ENCODE measurements at regions of chr3 and their contacts with region 1.

Region 1: GRCh38 chr3:187025656-187026316 is 95.5 kb downstream of the ST6GAL1 start:
- DNase-seq: peak; percentile 53
- ATAC-seq: peak; percentile 22
- H3K4me3 Mint-ChIP-seq: peak overlapping the region; percentile 88
- H3K27ac Mint-ChIP-seq: peak overlapping the region; percentile 97
- H3K4me1 Mint-ChIP-seq: peaks cover 50% of the 10 kb centered on the region
- H3K27me3 Mint-ChIP-seq: no peaks in the 10 kb centered on the region

Region 2: DNA sequence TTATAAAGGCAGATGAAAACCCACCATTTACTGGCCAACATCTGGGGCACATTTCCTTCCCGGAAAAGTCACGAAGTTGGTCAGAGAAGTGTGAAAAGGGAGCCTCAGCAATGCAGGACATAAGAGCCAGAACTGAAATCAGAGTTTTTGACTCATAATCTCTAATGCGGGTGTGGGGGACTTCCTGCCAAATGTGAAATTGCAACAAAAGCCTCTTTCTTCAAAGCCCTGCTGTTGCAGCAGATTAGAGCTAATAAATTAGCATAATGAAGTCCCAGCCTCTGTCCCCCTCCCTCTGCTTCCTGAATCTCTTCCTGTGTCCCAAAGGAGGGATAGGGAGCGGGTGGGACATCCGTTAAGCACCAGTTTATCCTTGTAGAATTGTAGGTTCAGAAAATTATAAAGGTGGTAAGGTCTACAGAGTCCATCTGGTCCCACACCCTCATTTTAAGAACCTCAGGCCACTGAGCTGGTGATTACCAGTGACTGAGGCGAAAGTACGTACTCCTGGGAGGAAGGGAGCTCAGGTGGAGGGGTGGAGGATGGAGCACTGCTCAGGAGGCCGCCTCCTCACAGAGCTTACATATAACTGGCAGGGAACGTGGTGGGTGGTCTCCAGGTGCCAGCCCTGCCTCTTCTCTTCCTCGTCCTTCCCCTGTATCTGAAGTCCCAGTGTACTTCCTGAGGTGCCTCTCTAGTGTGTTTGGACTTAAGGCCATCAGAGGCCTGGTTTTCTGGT is 60.5 kb before region 1 on chr3:
- POLR2A ChIA-PET with region 1: no interaction called
- DNase-seq: no peak
- ATAC-seq: no peak
- H3K4me3 Mint-ChIP-seq: no peak overlapping the region
- H3K27ac Mint-ChIP-seq: no peak overlapping the region
- H3K4me1 Mint-ChIP-seq: peaks cover 20% of the 10 kb centered on the region
- H3K27me3 Mint-ChIP-seq: no peaks in the 10 kb centered on the region

Region 3: GRCh38 chr3:187000711-187001151 is 25.1 kb before region 1 on chr3:
- POLR2A ChIA-PET with region 1: interaction called, 13 read pairs
- DNase-seq: no peak
- ATAC-seq: peak; percentile 64
- H3K4me3 Mint-ChIP-seq: peak overlapping the region; percentile 33
- H3K27ac Mint-ChIP-seq: peak overlapping the region; percentile 86
- H3K4me1 Mint-ChIP-seq: peaks cover 49% of the 10 kb centered on the region
- H3K27me3 Mint-ChIP-seq: no peaks in the 10 kb centered on the region

Region 4: DNA sequence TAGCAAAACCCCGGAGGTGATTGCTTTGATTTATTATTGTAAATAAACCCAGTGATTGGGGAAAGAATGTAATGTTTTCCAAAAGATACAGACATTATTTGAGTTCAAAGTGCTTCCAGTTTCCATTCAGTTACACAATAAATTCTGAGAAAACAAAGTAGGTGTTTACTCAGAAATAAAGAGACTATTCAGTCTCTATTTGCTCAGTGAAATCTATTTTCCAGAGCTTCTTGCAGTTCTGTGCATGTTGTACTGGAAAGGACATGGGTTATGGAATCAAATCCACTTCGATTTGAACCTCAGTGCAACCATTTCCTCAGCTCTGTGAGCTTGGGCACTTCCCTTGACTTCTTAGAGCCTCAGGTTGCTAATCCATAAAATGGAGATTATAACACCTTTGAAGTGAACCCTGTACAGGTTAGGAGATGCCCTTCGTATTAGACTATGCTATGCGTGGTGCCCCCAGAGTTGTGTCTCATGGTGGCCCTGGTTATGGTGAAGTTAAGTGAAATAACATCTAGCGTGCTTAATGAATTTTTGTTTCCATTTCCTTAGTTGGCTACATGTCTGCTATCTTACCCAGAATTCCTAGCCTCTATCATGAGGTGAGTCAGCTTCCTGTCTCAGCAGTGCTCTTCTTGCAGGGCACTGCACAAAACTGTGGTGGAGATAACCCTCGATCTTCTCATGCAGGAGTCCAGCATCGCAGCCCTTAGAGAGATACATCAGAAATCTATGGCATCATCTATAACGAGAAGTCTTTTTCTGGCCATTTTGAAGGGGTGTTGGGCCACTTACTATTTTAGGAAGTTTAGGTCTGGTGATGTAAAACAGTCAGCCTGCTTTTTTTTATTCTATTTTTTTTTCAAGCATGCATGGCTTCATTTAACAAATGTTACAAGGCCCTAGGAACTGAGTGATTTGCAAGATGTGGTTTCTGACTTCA is 15.8 kb after region 1 on chr3:
- POLR2A ChIA-PET with region 1: interaction called, 168 read pairs
- DNase-seq: no peak
- ATAC-seq: peak; percentile 92
- H3K4me3 Mint-ChIP-seq: peak overlapping the region; percentile 78
- H3K27ac Mint-ChIP-seq: peak overlapping the region; percentile 98
- H3K4me1 Mint-ChIP-seq: peaks cover 74% of the 10 kb centered on the region
- H3K27me3 Mint-ChIP-seq: no peaks in the 10 kb centered on the region

Measured in activated naive CD8-positive, alpha-beta T cell treated with anti-CD3 and anti-CD28 coated beads, Interleukin-2, amount 10 ng/mL, durations not matched to agents 7 days and 5 days (primary cell).